ENCODE measurements at regions of chr2 and their contacts with region 1.

Region 1: DNA sequence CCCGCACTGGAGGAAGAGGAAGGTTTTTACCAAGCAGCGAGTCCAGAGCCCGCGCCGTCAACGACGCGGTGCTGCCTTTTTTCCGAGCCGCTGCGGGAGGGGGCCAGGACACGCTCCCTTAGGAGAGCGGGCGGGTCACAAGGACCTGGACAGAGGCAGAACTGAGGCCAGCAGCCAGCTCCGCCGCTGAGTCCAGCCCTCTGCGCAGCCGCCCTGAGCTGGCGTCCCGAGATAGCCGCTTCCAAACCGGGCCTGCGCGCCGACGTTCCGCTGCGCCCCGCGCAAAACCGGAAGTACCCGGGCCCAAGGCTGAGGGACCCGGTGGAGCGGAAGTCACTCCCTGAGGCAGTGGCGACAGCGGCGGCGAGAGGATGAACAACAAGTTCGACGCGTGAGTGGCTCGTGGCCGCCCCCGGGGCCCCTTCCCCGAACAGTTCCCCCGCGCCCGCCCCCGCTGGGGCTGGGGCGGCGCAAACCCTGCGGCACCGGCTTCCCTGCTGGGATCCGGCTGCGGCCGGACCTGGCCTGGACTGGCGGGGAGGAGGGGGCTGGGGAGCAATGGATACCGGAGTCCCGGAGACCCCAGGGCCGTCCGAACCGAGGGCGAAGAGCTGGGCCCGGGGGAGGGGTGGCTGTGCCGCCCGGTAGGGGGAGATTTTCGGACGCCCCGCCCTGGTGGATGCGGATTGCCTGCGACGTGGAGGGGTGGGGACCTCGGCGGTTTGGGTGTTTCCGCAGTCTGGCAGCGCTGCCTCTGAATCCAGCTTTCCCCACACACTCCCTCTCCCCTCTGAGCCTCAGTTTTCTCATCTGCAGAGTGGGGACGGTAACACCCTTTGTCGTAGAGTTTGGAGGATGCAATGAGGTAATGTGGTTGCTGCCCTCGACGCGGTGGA is at the starts of genes EIF4E2 and TIGD1:
- DNase-seq: peak; percentile 87
- H3K4me3 Mint-ChIP-seq: peak within 1 kb of the TSS; percentile 90
- H3K27ac Mint-ChIP-seq: peak within 1 kb of the TSS; percentile 96
- H3K4me1 Mint-ChIP-seq: peaks cover 30% of the 10 kb centered on the region
- H3K27me3 Mint-ChIP-seq: no peaks in the 10 kb centered on the region
- CTCF ChIP-seq: no peak
- total RNA-seq, gene EIF4E2: 51.7 and 52.8 TPM in 2 replicates
- total RNA-seq, gene TIGD1: 4.9 and 5.2 TPM in 2 replicates

Region 2: DNA sequence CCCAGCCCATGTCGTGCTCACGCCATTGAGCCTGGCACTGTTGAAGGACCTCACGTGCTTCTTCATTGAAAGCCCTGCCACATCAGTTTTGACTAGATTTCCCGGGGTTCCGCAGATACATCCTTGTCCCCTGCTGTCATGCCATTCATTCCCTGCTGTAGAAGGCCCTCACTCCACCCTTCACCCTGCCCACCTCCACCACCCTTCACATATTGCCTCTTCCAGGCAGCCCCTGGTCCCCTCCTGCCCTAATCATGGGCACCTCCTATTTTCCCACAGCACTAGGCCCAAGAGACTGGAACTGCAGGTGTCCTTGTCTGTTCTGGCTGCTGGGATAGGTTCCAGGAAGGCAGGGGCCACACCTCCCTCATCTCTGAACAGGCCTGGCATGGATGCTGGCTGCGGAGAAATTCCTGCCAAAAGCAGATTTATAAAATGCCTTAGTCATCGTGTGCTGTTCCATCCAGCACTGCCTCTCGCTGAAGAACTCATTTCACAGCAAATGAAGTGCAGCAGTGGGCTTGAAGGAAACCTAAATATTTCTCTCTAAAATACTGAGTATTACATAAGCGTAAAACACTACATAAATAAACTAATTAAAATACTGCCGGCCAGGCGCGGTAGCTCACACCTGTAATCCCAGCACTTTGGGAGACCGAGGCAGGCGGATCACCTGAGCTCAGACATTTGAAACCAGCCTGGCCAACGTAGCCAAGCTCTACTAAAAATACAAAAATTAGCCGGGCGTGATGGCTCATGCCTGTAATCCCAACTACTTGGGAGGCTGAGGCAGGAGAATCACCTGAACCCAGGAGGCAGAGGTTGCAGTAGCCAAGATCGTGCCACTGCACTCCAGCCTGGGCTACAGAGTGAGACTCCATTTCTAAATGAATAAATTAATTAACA is 38.3 kb after region 1 on chr2:
- CTCF ChIA-PET with region 1: no interaction called
- POLR2A ChIA-PET with region 1: interaction called, 35 read pairs
- intact Hi-C with region 1: loop called (anchors 2 kb)
- DNase-seq: peak; percentile 90
- H3K4me3 Mint-ChIP-seq: no peak overlapping the region
- H3K27ac Mint-ChIP-seq: peak overlapping the region; percentile 61
- H3K4me1 Mint-ChIP-seq: peaks cover 23% of the 10 kb centered on the region
- H3K27me3 Mint-ChIP-seq: no peaks in the 10 kb centered on the region
- CTCF ChIP-seq: no peak

Region 3: GRCh38 chr2:232683368-232683767 is 132.8 kb after region 1 on chr2:
- CTCF ChIA-PET with region 1: no interaction called
- POLR2A ChIA-PET with region 1: no interaction called
- intact Hi-C with region 1: no loop called
- DNase-seq: no peak
- H3K4me3 Mint-ChIP-seq: no peak overlapping the region
- H3K27ac Mint-ChIP-seq: no peak overlapping the region
- H3K4me1 Mint-ChIP-seq: no peaks in the 10 kb centered on the region
- H3K27me3 Mint-ChIP-seq: peaks cover 45% of the 10 kb centered on the region
- CTCF ChIP-seq: no peak

Measured in MCF 10A (cell line).